Heart right ventricle (tissue), 16 donors: ENCODE measurements at regions of chr2 and their contacts with region 1.

Region 1: DNA sequence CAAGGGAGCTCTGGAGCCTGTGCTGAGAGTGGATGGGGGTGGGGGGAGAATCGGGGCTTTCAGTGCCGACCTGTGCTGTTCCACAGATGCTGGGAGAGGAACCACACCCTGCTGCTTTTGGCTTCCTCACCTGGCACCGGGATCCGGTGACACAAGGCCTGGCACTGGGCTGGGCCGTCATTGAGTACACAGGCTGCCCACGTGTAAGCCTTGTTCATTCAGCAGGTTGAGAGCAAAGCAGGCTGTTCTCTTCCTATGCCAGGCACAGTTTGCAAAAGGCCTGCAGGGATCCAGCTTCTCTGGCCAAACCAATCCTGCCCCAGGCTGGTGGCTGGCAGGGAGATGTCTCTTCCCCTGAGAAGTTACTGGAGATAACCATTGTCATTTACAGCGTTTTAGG is 17.1 kb downstream of the TRIB2 start:
- DNase-seq: peak in 1 of 2 donors; percentile 68
- ATAC-seq: peak; percentile 29 to 86 (median 48)
- H3K4me3 ChIP-seq: no peak overlapping the region
- H3K27ac ChIP-seq: peak overlapping the region; percentile 7 to 89 (median 78)
- H3K4me1 ChIP-seq: peaks cover 31 to 99% (median 85%) of the 10 kb centered on the region in 9 donors
- H3K27me3 ChIP-seq: no peaks in the 10 kb centered on the region
- CTCF ChIP-seq: no peak

Region 2: DNA sequence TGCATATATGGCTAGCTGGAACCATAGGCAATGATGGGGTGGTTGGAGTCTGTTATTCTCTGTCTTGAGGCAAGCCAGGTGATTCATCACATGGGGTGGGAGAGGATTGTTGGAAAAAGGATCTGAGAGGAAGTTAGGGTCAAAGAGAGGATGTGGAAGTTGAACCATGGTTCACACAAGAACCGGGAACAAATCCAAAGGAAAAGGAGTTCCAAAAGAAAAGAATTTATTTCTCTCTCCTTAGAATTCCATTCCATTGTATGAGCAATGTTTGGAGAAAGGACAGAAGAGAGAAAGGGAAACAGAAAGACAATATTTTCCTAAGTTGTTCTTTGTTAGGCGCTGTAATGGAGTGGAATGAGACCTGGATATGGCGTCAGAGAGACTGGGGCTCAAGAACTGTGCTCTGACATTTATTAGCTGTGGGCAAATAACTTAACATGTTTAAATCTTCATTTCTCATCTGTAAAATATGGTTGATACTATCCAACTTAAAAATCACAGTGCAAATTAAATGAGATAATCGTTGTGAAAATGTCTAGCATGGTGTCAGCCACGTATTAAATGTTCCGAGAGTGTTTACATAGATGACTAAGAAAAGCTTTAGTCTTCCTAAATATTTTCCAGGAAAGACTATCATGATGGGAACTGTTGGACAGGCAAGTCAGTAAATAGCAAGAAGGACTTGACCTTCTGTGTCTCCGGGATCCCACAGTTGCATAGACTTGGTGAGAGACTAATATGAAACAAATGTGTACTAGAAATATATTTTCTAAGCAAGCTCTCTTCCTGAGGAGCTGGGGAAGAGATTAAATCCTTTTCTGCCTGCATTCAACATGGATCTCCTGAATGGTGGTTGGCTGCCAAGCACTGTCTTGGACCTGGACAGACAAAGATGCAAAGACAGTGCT is 54.3 kb after region 1 on chr2:
- intact Hi-C with region 1: loop called in 2 of 10 experiments (anchors 5 to 10 kb)
- DNase-seq: peak in 1 of 2 donors; percentile 43
- ATAC-seq: peak; percentile 57 to 93 (median 84)
- H3K4me3 ChIP-seq: peak overlapping the region in 2 of 10 donors; percentile 3 to 13
- H3K27ac ChIP-seq: peak overlapping the region; percentile 19 to 87 (median 68)
- H3K4me1 ChIP-seq: peaks cover 0 to 20% (median 16%) of the 10 kb centered on the region in 9 donors
- H3K27me3 ChIP-seq: no peaks in the 10 kb centered on the region
- CTCF ChIP-seq: no peak

Region 3: GRCh38 chr2:12797815-12798214 is 64.0 kb after region 1 on chr2:
- intact Hi-C with region 1: loop called in 2 of 10 experiments (anchors 5 kb)
- DNase-seq: no peak
- ATAC-seq: peak in 6 of 8 donors; percentile 54 to 85 (median 78)
- H3K4me3 ChIP-seq: no peak overlapping the region
- H3K27ac ChIP-seq: peak overlapping the region in 9 of 10 donors; percentile 30 to 80 (median 66)
- H3K4me1 ChIP-seq: peaks cover 0 to 21% (median 14%) of the 10 kb centered on the region in 9 donors
- H3K27me3 ChIP-seq: no peaks in the 10 kb centered on the region
- CTCF ChIP-seq: no peak

Region 4: DNA sequence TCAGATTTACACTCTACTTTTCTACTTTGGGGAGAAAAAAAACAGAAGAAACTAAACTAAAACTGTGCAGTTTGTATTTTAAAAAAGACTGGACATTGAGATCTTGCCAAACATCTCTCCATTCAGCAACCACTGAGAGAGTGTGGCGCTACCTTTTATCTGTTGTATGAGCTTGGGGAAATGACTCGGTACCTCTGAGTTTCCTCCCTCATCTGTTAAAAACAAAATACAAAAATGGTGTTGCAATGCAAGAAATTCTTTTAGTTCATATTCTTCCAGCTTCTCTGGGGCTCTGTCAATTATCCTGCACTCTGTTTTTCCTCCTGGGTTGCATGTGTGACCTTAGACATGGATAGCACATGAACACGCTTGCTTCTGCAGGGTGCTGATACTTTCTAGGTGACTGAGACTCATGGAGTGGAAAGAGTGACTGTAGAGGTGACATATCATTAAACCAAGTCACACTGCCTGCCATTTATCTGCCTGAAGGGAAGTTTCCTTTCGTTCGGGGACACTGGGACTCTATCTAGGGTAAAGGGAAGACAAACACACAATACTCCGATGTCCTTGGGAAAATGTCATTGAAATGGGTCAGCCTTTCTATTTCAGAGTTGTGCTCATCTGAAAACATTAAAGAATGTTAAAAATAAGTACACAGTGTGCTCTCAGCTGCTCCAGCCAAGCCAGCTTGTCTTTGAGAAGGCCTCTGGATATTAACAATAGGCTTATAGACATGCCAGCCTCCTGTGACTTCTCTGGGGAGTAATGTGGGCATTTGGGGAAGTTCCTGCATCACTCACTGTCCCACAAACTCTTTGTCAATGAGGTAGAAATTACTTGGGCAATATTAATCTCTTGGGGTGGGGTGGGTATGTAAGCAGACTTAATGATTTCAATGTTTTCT is 74.3 kb after region 1 on chr2:
- intact Hi-C with region 1: loop called in 4 of 10 experiments (anchors 5 to 10 kb)
- DNase-seq: peak in 1 of 2 donors; percentile 23
- ATAC-seq: peak; percentile 46 to 92 (median 76)
- H3K4me3 ChIP-seq: no peak overlapping the region
- H3K27ac ChIP-seq: peak overlapping the region; percentile 28 to 87 (median 67)
- H3K4me1 ChIP-seq: peaks cover 10 to 70% (median 42%) of the 10 kb centered on the region in 9 donors
- H3K27me3 ChIP-seq: no peaks in the 10 kb centered on the region
- CTCF ChIP-seq: no peak

Region 5: DNA sequence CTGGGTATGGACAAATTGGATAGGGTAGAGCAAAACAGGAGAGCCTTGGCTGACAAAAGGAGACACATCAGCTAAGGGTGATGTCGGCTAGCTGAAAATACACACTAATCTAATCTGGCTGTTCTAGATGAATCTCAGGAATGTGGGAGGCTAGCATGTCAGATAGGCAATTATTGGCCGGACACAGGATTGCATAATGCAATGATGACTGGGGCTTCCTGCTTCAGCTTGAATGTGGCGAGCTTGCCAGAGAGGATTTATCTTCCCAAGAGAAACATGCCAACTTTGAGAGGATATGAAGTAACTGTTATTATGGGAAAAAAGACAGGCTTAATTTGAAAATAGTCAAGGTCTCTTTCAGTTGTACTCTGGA is 85.2 kb after region 1 on chr2:
- intact Hi-C with region 1: loop called in 4 of 10 experiments (anchors 5 to 10 kb)
- DNase-seq: peak in 1 of 2 donors; percentile 93
- ATAC-seq: peak; percentile 95 to 97 (median 96)
- H3K4me3 ChIP-seq: peak overlapping the region in 1 of 10 donors; percentile 11
- H3K27ac ChIP-seq: peak overlapping the region; percentile 70 to 92 (median 87)
- H3K4me1 ChIP-seq: peaks cover 16 to 70% (median 44%) of the 10 kb centered on the region in 9 donors
- H3K27me3 ChIP-seq: no peaks in the 10 kb centered on the region
- CTCF ChIP-seq: no peak

Region 6: GRCh38 chr2:13000664-13001363 is 267.0 kb after region 1 on chr2:
- intact Hi-C with region 1: loop called in 2 of 10 experiments (anchors 5 to 10 kb)
- DNase-seq: peak in 1 of 2 donors; percentile 83
- ATAC-seq: peak; percentile 36 to 90 (median 82)
- H3K4me3 ChIP-seq: peak overlapping the region in 9 of 10 donors; percentile 2 to 41 (median 30)
- H3K27ac ChIP-seq: peak overlapping the region in 9 of 10 donors; percentile 13 to 75 (median 63)
- H3K4me1 ChIP-seq: peaks cover 0 to 51% (median 30%) of the 10 kb centered on the region in 9 donors
- H3K27me3 ChIP-seq: no peaks in the 10 kb centered on the region
- CTCF ChIP-seq: no peak